Head of caudate nucleus (tissue), 42 donors: ENCODE measurements at regions of chr12 and their contacts with region 1.

Region 1: GRCh38 chr12:21697904-21698630 is 40.4 kb upstream of the LDHB start:
- DNase-seq: no peak

Region 2: DNA sequence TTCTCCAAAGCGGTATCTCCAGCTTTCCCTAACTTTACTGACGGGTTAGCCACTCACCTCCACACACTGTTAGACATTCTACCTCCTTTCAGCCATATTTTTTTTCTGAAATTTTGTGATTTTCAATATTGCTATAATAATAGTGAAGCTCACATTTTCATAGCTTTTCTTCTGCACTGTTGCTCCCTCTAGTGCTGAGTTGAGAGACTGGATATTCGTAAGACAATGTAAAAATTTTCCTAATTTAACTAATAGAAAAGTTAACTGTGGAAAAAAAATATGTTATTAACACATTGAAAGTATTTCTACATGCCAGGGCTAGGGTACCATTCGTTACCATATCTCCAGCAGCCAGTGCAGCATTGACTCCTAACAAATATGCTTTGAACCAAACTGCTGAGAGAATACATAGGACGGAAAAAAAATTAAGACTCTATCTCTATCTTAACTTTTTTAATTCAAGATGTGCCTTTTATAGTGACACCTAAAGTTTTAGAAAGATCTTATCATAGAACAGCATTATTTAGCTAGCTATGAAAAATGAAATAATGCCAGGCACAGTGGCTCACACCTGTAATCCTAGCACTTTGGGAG is 291.8 kb after region 1 on chr12:
- intact Hi-C with region 1: loop called (anchors 10 kb)
- DNase-seq: peak in 6 of 42 donors; percentile 3 to 47 (median 8)